Naive thymus-derived CD4-positive, alpha-beta T cell (primary cell): ENCODE measurements at regions of chr17 and their contacts with region 1.

Region 1: DNA sequence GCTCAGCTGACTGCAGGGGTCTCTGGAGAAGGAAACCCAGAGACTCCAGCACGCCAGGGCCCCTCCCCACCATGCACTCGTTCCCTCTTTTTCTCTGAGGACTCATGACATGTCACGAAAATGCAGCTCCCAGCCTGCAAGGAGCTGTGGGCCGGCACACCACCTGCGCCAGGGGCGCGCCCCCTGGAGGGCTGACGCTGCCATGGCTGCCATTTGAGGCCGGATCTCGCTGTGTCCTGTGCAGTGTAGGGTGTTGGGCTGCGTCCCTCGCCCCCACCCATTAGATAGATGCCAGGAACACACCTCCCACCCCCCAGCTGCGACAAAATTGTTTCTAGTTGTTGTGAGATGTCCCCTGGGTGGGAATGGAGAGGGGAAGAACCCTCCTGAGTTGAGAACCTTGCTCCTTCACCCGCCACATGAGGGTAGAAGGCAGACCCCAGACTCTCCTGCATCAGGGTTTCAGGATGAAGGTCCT is 8.2 kb downstream of the SYNGR2 start:
- DNase-seq: peak; percentile 58 to 82 (median 74)
- ATAC-seq: peak; percentile 83
- H3K4me3 ChIP-seq: no peak overlapping the region
- H3K4me3 Mint-ChIP-seq: peak overlapping the region in 1 of 10 donors; percentile 23
- H3K27ac ChIP-seq: no peak overlapping the region
- H3K27ac Mint-ChIP-seq: peak overlapping the region in 1 of 9 donors; percentile 31
- H3K4me1 ChIP-seq: peaks cover 16 to 33% of the 10 kb centered on the region in 2 donors
- H3K4me1 Mint-ChIP-seq: peaks cover 28 to 62% (median 48%) of the 10 kb centered on the region in 7 donors
- H3K27me3 ChIP-seq: no peaks in the 10 kb centered on the region
- H3K27me3 Mint-ChIP-seq: no peaks in the 10 kb centered on the region

Region 2: DNA sequence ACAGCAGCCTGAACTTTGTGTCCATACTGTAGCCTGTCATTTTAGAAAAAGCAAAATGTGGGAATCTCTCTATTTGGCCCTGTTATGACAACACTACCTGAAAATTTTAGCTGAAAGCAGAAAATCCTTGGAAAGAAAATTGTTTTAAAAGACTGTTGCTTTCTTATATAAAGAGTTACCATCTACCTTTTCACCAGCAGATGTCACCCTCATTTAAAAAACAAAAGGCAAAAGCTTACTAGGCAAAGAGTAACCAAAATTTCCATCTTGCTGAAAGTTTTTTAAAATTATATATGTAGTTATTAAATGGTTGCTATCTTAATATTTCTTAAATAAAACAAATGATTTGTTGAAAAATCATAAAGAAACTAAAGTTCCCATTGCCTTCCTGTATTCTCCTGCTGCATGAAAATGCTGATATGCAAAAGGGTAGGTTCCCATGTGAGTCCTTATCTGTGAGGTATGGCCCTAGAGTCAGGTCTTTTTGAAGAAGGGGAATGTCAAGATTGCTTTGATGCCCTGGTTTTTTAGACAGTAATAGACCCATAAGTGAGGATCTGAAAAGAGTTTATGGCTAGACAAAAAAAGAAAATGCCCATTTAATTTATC is 157.1 kb before region 1 on chr17:
- CTCF ChIA-PET with region 1: interaction called, 13 read pairs
- POLR2A ChIA-PET with region 1: no interaction called
- intact Hi-C with region 1: loop called (anchors 1 kb)
- DNase-seq: peak in 5 of 9 donors; percentile 20 to 37 (median 26)
- ATAC-seq: no peak
- H3K4me3 ChIP-seq: no peak overlapping the region
- H3K4me3 Mint-ChIP-seq: peak overlapping the region in 2 of 10 donors; percentile 7 to 37
- H3K27ac ChIP-seq: no peak overlapping the region
- H3K27ac Mint-ChIP-seq: peak overlapping the region in 6 of 9 donors; percentile 1 to 89 (median 38)
- H3K4me1 ChIP-seq: peaks cover 11 to 15% of the 10 kb centered on the region in 2 donors
- H3K4me1 Mint-ChIP-seq: peaks cover 14 to 45% (median 28%) of the 10 kb centered on the region in 7 donors
- H3K27me3 ChIP-seq: no peaks in the 10 kb centered on the region
- H3K27me3 Mint-ChIP-seq: no peaks in the 10 kb centered on the region

Region 3: GRCh38 chr17:78112518-78113226 is 63.9 kb before region 1 on chr17:
- CTCF ChIA-PET with region 1: interaction called, 34 read pairs
- POLR2A ChIA-PET with region 1: interaction called, 25 read pairs
- intact Hi-C with region 1: loop called (anchors 1 to 2 kb)
- DNase-seq: peak; percentile 57 to 89 (median 73)
- ATAC-seq: peak; percentile 85
- H3K4me3 ChIP-seq: no peak overlapping the region
- H3K4me3 Mint-ChIP-seq: peak overlapping the region in 7 of 10 donors; percentile 11 to 71 (median 61)
- H3K27ac ChIP-seq: peak overlapping the region; percentile 43
- H3K27ac Mint-ChIP-seq: peak overlapping the region; percentile 65 to 95 (median 84)
- H3K4me1 ChIP-seq: peaks cover 21 to 36% of the 10 kb centered on the region in 2 donors
- H3K4me1 Mint-ChIP-seq: peaks cover 35 to 64% (median 47%) of the 10 kb centered on the region in 7 donors
- H3K27me3 ChIP-seq: no peaks in the 10 kb centered on the region
- H3K27me3 Mint-ChIP-seq: no peaks in the 10 kb centered on the region

Region 4: GRCh38 chr17:78133971-78134898 is 42.4 kb before region 1 on chr17:
- CTCF ChIA-PET with region 1: interaction called, 7 read pairs
- POLR2A ChIA-PET with region 1: interaction called, 20 read pairs
- intact Hi-C with region 1: loop called in 1 of 2 experiments (anchors 1 kb)
- DNase-seq: peak in 8 of 9 donors; percentile 72 to 89 (median 84)
- ATAC-seq: peak; percentile 58
- H3K4me3 ChIP-seq: peak overlapping the region; percentile 95
- H3K4me3 Mint-ChIP-seq: peak overlapping the region; percentile 81 to 99 (median 92)
- H3K27ac ChIP-seq: peak overlapping the region; percentile 77
- H3K27ac Mint-ChIP-seq: peak overlapping the region; percentile 68 to 95 (median 87)
- H3K4me1 ChIP-seq: peaks cover 56 to 66% of the 10 kb centered on the region in 2 donors
- H3K4me1 Mint-ChIP-seq: peaks cover 55 to 73% (median 66%) of the 10 kb centered on the region in 7 donors
- H3K27me3 ChIP-seq: no peaks in the 10 kb centered on the region
- H3K27me3 Mint-ChIP-seq: peaks cover 0 to 3% (median 0%) of the 10 kb centered on the region in 5 donors

Region 5: GRCh38 chr17:78147315-78147998 is 29.1 kb before region 1 on chr17:
- CTCF ChIA-PET with region 1: interaction called, 13 read pairs
- POLR2A ChIA-PET with region 1: interaction called, 5 read pairs
- intact Hi-C with region 1: no loop called
- DNase-seq: peak in 4 of 9 donors; percentile 30 to 44 (median 36)
- ATAC-seq: peak; percentile 74
- H3K4me3 ChIP-seq: no peak overlapping the region
- H3K4me3 Mint-ChIP-seq: peak overlapping the region in 4 of 10 donors; percentile 5 to 46 (median 18)
- H3K27ac ChIP-seq: peak overlapping the region; percentile 25
- H3K27ac Mint-ChIP-seq: peak overlapping the region; percentile 3 to 87 (median 64)
- H3K4me1 ChIP-seq: peaks cover 0 to 16% of the 10 kb centered on the region in 2 donors
- H3K4me1 Mint-ChIP-seq: peaks cover 15 to 37% (median 32%) of the 10 kb centered on the region in 7 donors
- H3K27me3 ChIP-seq: no peaks in the 10 kb centered on the region
- H3K27me3 Mint-ChIP-seq: peaks cover 0 to 4% (median 0%) of the 10 kb centered on the region in 5 donors

Region 6: GRCh38 chr17:78166416-78166815 is 10.2 kb before region 1 on chr17:
- CTCF ChIA-PET with region 1: no interaction called
- POLR2A ChIA-PET with region 1: no interaction called
- intact Hi-C with region 1: no loop called
- DNase-seq: no peak
- ATAC-seq: no peak
- H3K4me3 ChIP-seq: no peak overlapping the region
- H3K4me3 Mint-ChIP-seq: peak overlapping the region in 1 of 10 donors; percentile 16
- H3K27ac ChIP-seq: no peak overlapping the region
- H3K27ac Mint-ChIP-seq: no peak overlapping the region
- H3K4me1 ChIP-seq: peaks cover 0 to 13% of the 10 kb centered on the region in 2 donors
- H3K4me1 Mint-ChIP-seq: peaks cover 2 to 21% (median 16%) of the 10 kb centered on the region in 7 donors
- H3K27me3 ChIP-seq: no peaks in the 10 kb centered on the region
- H3K27me3 Mint-ChIP-seq: no peaks in the 10 kb centered on the region